Heart left ventricle (tissue), 16 donors: ENCODE measurements at regions of chr13 and their contacts with region 1.

Region 1: DNA sequence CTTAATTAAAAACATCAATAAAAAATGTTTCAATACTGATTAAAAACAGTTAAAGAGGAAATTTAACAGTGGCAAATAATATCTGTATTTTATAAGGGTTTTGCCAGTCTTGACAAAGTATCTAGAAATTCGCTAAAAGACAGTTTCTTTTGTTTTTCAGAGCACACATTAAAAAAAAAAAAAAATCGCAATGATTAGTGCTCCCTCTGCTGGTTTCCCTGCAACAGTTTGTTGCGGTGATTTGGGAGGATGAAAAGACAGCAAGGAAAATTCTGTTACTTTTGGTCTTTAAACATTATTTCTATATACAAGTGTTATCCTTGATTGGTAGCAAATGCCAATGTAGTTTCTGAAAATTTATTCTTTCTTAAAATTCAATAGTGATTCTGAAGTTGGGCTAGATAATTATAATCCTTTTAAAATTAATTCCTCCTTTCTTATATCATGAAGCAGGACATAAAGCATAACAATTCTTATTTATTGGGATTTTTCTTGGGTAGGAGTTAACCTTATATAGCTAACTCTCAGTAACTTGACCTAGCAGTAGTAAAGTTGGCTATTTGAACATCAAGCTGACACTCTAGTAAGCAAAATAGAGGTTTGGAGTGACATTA is 23.1 kb upstream of the SPRY2 start:
- DNase-seq: no peak
- ATAC-seq: no peak
- H3K4me3 ChIP-seq: peak overlapping the region in 8 of 12 donors; percentile 6 to 40 (median 29)
- H3K27ac ChIP-seq: peak overlapping the region in 3 of 12 donors; percentile 9 to 30 (median 16)
- H3K4me1 ChIP-seq: peaks cover 0 to 22% (median 8%) of the 10 kb centered on the region in 12 donors
- H3K27me3 ChIP-seq: no peaks in the 10 kb centered on the region
- CTCF ChIP-seq: peak; percentile 69 to 93 (median 84)
- POLR2A ChIP-seq: no peak

Region 2: DNA sequence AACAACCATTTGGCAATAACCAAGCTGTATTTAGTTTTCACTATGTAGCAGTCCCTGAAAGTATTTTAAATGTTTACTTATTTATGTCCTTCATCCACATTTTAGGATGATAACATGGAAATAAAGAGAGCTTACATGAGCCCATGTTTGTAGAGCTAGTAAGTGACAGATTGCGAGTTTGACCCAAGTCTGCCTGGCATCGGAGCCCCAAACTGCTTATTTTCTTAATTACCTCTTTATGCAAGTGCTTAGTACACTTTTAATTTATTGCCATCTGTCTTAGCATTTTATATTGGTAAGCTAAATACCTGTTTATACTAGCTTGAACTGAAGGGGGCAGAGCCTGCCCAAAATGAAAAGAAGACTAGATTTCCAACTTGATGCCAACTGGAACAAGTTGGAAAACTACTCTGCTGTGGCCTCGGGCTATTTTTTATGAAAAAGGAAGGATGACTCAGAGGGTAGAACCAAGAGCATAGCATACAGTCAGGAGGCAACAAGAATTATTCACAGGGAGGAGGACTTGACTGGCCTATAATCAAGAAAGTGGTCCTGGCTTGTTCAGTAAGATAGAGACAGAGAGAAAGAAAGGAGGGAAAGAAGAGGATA is 732.8 kb before region 1 on chr13:
- intact Hi-C with region 1: loop called in 2 of 10 experiments (anchors 10 kb)
- DNase-seq: peak in 1 of 5 donors; percentile 10
- ATAC-seq: peak in 3 of 4 donors; percentile 82 to 91 (median 90)
- H3K4me3 ChIP-seq: no peak overlapping the region
- H3K27ac ChIP-seq: peak overlapping the region in 2 of 12 donors; percentile 5 to 12
- H3K4me1 ChIP-seq: peaks cover 0 to 11% (median 0%) of the 10 kb centered on the region in 12 donors
- H3K27me3 ChIP-seq: no peaks in the 10 kb centered on the region
- CTCF ChIP-seq: peak in 10 of 12 donors; percentile 24 to 54 (median 38)
- POLR2A ChIP-seq: no peak

Region 3: GRCh38 chr13:79775830-79776229 is 588.2 kb before region 1 on chr13:
- intact Hi-C with region 1: loop called in 6 of 10 experiments (anchors 5 to 10 kb)
- DNase-seq: peak in 2 of 5 donors; percentile 17 to 37
- ATAC-seq: peak in 3 of 4 donors; percentile 61 to 70 (median 69)
- H3K4me3 ChIP-seq: no peak overlapping the region
- H3K27ac ChIP-seq: no peak overlapping the region
- H3K4me1 ChIP-seq: peaks cover 0 to 24% (median 4%) of the 10 kb centered on the region in 12 donors
- H3K27me3 ChIP-seq: no peaks in the 10 kb centered on the region
- CTCF ChIP-seq: peak in 11 of 12 donors; percentile 44 to 75 (median 60)
- POLR2A ChIP-seq: no peak

Region 4: GRCh38 chr13:80214521-80214991 is 149.4 kb before region 1 on chr13:
- intact Hi-C with region 1: no loop called
- DNase-seq: no peak
- ATAC-seq: no peak
- H3K4me3 ChIP-seq: no peak overlapping the region
- H3K27ac ChIP-seq: no peak overlapping the region
- H3K4me1 ChIP-seq: no peaks in the 10 kb centered on the region
- H3K27me3 ChIP-seq: no peaks in the 10 kb centered on the region
- CTCF ChIP-seq: no peak
- POLR2A ChIP-seq: no peak

Region 5: DNA sequence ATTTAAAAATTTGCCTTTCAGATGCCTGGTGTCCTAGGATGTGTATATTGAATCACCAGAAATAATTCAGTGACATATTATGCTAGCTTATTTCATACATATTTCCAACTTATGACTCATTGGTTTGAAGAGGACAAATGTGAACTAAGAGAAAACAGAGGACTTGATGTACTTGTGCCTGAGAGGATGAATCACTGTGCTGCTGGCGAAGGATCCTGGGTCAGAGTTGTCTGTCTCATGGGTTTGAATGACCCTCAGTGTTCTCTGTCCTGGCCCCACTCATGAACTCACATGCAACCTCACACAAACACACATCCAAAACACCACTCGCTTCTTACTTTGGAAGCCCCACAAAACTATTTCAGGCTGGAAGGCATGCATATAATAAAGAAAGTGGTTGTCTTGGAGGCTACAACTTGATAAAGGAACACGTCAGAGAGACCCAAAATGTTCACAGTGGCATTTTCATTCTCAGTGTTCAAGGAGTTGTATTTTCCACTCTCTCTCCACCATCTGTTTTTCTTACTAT is 105.9 kb after region 1 on chr13:
- intact Hi-C with region 1: loop called in 1 of 10 experiments (anchors 10 kb)
- DNase-seq: peak; percentile 73 to 89 (median 76)
- ATAC-seq: peak; percentile 98 to 100 (median 98)
- H3K4me3 ChIP-seq: peak overlapping the region in 1 of 12 donors; percentile 4
- H3K27ac ChIP-seq: peak overlapping the region; percentile 79 to 96 (median 86)
- H3K4me1 ChIP-seq: peaks cover 8 to 36% (median 24%) of the 10 kb centered on the region in 12 donors
- H3K27me3 ChIP-seq: no peaks in the 10 kb centered on the region
- CTCF ChIP-seq: no peak
- POLR2A ChIP-seq: no peak